ENCODE measurements at regions of chr18 and their contacts with region 1.

Region 1: DNA sequence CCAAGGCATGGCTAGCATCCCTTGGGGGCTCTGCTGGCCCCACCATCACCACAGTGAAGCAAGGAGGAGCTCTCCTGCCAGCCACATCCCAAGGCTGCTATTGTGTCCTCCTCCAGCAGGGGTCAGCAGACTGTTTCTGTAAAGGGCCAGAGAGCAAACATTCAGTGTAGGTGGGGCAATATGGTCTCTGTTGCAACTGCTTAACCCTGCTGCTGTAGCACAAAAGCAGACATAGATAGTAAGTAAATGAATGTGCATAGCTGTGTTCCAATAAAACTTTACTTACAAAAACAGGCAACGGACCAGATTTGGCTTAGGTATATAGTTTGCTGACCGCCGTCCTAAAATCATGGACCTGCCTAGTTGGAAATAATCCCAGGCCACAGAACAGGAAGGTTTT is 36.4 kb upstream of the ZBTB7C start:
- DNase-seq: peak; percentile 37 to 90
- H3K4me3 ChIP-seq: no peak overlapping the region
- H3K27ac ChIP-seq: no peak overlapping the region
- H3K4me1 ChIP-seq: peaks cover 8 to 26% of the 10 kb centered on the region in 2 donors
- H3K27me3 ChIP-seq: no peaks in the 10 kb centered on the region
- CTCF ChIP-seq: peak; percentile 70 to 93 (median 85)

Region 2: DNA sequence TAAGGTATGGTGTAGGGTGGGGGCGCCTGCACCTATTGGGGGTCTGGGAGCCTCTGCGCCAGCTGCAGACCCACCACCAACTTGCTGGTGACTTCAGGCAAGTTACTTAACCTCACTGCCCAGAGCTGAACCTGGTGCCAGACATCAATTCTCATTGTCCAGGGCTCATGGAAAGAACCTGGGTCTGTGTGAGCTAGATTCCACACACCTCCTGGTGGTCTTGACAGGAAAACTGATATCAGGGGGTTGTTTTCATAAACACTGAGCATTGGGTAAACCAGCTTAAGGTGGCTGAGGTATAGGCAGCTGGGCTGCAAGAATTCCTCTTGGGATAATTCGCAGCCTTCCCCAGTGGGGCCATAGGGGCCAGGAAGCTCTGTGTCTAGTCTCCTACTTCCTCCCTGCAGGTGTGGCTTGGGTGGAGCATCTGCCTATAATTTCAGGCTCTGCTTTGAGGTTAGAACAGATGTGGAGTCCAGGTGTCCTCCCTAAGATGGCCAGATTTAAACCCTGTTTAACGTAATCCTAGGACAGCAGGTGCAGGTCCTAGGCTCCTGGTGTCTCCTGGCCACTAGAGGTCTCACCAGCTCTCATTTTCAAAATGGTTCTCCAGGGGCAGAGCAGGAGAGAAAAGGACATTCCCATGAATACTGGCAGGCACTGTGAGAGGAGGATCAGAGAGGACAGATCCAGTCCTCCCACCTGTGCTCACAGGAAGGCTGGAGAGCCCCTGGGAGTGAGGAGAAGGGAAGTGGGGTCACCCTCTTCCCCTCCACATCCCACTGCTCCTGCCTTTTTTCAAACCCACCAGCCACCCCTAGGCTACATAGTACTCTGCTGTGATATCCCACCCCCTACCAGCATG is 414.7 kb before region 1 on chr18:
- intact Hi-C with region 1: loop called (anchors 1 kb)
- DNase-seq: no peak
- H3K4me3 ChIP-seq: no peak overlapping the region
- H3K27ac ChIP-seq: no peak overlapping the region
- H3K4me1 ChIP-seq: peaks cover 6 to 12% of the 10 kb centered on the region in 2 donors
- H3K27me3 ChIP-seq: no peaks in the 10 kb centered on the region
- CTCF ChIP-seq: peak; percentile 46 to 78 (median 68)

Region 3: GRCh38 chr18:48230467-48231113 is 214.9 kb before region 1 on chr18:
- intact Hi-C with region 1: loop called (anchors 2 kb)
- DNase-seq: no peak
- H3K4me3 ChIP-seq: no peak overlapping the region
- H3K27ac ChIP-seq: no peak overlapping the region
- H3K4me1 ChIP-seq: peaks cover 0 to 3% of the 10 kb centered on the region in 2 donors
- H3K27me3 ChIP-seq: no peaks in the 10 kb centered on the region
- CTCF ChIP-seq: peak; percentile 20 to 37 (median 22)

Region 4: GRCh38 chr18:48342125-48342524 is 103.4 kb before region 1 on chr18:
- intact Hi-C with region 1: loop called (anchors 5 kb)
- DNase-seq: no peak
- H3K4me3 ChIP-seq: peak overlapping the region in 1 of 2 donors; percentile 37
- H3K27ac ChIP-seq: peak overlapping the region; percentile 81 to 84
- H3K4me1 ChIP-seq: peaks cover 4 to 28% of the 10 kb centered on the region in 2 donors
- H3K27me3 ChIP-seq: no peaks in the 10 kb centered on the region
- CTCF ChIP-seq: no peak

Region 5: DNA sequence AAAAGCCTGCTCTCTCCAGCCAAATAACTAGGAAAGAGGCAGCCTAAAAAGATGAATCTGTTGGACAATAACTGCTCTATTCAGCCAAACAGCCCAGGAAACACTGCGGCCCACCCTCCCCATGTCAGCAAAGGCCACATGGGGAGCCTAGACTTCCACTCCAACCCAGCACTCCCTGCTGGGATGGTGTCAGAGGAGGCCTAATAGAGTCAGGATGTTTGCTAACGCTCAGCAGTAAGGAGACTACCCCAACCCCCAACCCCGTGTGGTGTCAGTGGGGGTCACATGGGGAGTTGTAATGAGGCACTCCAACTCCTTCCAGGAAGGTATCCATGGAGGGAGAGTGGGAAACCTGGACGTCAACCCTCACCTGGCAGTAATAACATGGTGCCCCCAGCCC is 78.0 kb before region 1 on chr18:
- intact Hi-C with region 1: no loop called
- DNase-seq: no peak
- H3K4me3 ChIP-seq: no peak overlapping the region
- H3K27ac ChIP-seq: no peak overlapping the region
- H3K4me1 ChIP-seq: no peaks in the 10 kb centered on the region
- H3K27me3 ChIP-seq: no peaks in the 10 kb centered on the region
- CTCF ChIP-seq: no peak

Region 6: DNA sequence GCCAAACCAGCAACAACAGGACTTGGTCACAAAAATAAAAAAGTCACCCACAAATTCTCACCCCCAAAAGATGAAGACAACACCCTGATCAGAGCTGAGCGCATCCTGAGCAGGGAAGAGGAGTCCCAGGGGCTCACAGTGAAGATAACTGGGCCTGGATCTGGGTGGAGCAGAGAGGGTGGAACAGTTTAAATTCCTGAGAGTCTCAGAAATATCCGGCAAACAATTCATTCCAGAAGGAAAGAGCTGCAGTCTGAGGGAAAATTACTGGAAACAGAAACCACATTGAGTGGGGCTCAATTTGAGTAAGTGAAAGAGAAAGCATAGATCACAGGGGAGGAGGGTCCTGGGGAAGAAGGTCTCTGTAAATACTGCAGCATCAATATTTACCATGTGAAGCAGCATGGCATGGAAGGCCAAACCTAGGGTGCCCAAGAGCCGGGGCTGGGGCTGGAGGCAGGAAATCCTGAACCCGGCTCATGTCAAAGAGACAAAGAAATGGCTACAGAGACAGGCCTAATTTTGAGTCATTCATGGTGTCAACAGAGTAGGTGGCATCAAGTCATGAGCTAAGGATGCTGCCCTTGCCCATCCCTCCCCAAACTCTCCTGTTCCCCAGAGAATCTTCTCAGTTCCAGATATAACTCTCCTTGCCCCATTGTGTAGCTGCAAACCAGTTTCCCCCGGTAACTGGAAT is 25.1 kb after region 1 on chr18:
- intact Hi-C with region 1: loop called (anchors 2 kb)
- DNase-seq: no peak
- H3K4me3 ChIP-seq: no peak overlapping the region
- H3K27ac ChIP-seq: peak overlapping the region; percentile 23 to 39
- H3K4me1 ChIP-seq: no peaks in the 10 kb centered on the region
- H3K27me3 ChIP-seq: no peaks in the 10 kb centered on the region
- CTCF ChIP-seq: no peak